Naive thymus-derived CD4-positive, alpha-beta T cell (primary cell): ENCODE measurements at regions of chr7 and their contacts with region 1.

Region 1: DNA sequence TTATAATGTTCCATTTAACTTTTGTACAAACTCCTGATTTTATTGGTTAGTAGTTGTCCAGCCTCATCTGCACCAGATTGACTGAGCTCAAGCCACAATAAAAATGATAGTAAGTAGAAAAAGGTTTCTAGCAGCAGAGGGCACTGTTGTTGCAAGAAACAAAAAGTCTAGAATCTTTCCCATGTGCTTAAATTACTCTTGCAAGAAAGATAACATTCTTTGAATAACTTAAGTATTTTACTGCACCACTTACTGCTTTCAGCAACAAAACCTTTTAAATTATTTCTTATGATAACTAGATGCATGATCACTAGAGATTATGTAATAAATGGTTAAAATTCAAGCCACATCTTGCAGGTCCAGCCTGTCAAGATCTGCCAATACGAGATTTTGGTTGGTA is 27.0 kb downstream of the LMOD2 start:
- DNase-seq: peak in 7 of 9 donors; percentile 4 to 53 (median 41)
- ATAC-seq: peak; percentile 45
- H3K4me3 ChIP-seq: no peak overlapping the region
- H3K4me3 Mint-ChIP-seq: no peak overlapping the region
- H3K27ac ChIP-seq: no peak overlapping the region
- H3K27ac Mint-ChIP-seq: no peak overlapping the region
- H3K4me1 ChIP-seq: no peaks in the 10 kb centered on the region
- H3K4me1 Mint-ChIP-seq: no peaks in the 10 kb centered on the region
- H3K27me3 ChIP-seq: no peaks in the 10 kb centered on the region
- H3K27me3 Mint-ChIP-seq: no peaks in the 10 kb centered on the region

Region 2: GRCh38 chr7:122457965-122458364 is 1224.7 kb before region 1 on chr7:
- CTCF ChIA-PET with region 1: no interaction called
- POLR2A ChIA-PET with region 1: no interaction called
- intact Hi-C with region 1: no loop called
- DNase-seq: no peak
- ATAC-seq: no peak
- H3K4me3 ChIP-seq: no peak overlapping the region
- H3K4me3 Mint-ChIP-seq: no peak overlapping the region
- H3K27ac ChIP-seq: no peak overlapping the region
- H3K27ac Mint-ChIP-seq: no peak overlapping the region
- H3K4me1 ChIP-seq: no peaks in the 10 kb centered on the region
- H3K4me1 Mint-ChIP-seq: no peaks in the 10 kb centered on the region
- H3K27me3 ChIP-seq: no peaks in the 10 kb centered on the region
- H3K27me3 Mint-ChIP-seq: no peaks in the 10 kb centered on the region

Region 3: GRCh38 chr7:123393623-123394022 is 289.1 kb before region 1 on chr7:
- CTCF ChIA-PET with region 1: no interaction called
- POLR2A ChIA-PET with region 1: no interaction called
- intact Hi-C with region 1: no loop called
- DNase-seq: no peak
- ATAC-seq: no peak
- H3K4me3 ChIP-seq: no peak overlapping the region
- H3K4me3 Mint-ChIP-seq: no peak overlapping the region
- H3K27ac ChIP-seq: no peak overlapping the region
- H3K27ac Mint-ChIP-seq: no peak overlapping the region
- H3K4me1 ChIP-seq: no peaks in the 10 kb centered on the region
- H3K4me1 Mint-ChIP-seq: no peaks in the 10 kb centered on the region
- H3K27me3 ChIP-seq: no peaks in the 10 kb centered on the region
- H3K27me3 Mint-ChIP-seq: peaks cover 0 to 6% (median 0%) of the 10 kb centered on the region in 5 donors

Region 4: GRCh38 chr7:123480107-123480506 is 202.6 kb before region 1 on chr7:
- CTCF ChIA-PET with region 1: no interaction called
- POLR2A ChIA-PET with region 1: no interaction called
- intact Hi-C with region 1: no loop called
- DNase-seq: no peak
- ATAC-seq: no peak
- H3K4me3 ChIP-seq: no peak overlapping the region
- H3K4me3 Mint-ChIP-seq: no peak overlapping the region
- H3K27ac ChIP-seq: no peak overlapping the region
- H3K27ac Mint-ChIP-seq: no peak overlapping the region
- H3K4me1 ChIP-seq: no peaks in the 10 kb centered on the region
- H3K4me1 Mint-ChIP-seq: no peaks in the 10 kb centered on the region
- H3K27me3 ChIP-seq: no peaks in the 10 kb centered on the region
- H3K27me3 Mint-ChIP-seq: peaks cover 0 to 44% (median 25%) of the 10 kb centered on the region in 5 donors

Region 5: DNA sequence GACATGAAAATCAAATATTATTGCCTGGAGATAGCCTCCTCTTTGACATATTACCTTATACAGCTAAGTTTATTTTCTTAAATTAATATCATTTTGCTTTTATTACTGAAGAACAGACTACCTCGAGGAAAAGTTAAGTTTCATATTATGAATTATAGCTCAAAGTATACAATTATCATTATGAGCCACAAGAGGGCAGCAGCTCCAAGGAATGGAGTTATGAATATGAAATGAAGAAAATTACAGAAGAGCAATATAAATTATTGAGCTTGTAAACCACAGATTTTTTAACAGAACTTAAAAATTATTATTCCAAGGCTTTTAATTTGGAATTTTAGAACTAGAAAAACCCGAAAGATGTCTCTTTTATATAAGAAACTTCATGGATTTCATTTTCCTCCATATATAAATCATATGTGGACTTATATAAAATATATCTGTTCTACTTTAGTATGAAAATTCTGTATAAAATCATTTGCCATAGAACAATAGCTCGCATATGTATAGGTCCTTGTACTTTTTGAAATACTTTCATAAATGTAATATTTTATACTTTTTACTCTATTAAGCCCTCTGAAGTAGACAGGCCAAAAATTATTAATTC is 188.4 kb before region 1 on chr7:
- CTCF ChIA-PET with region 1: no interaction called
- POLR2A ChIA-PET with region 1: no interaction called
- intact Hi-C with region 1: loop called in 1 of 2 experiments (anchors 5 kb)
- DNase-seq: peak in 6 of 9 donors; percentile 2 to 46 (median 36)
- ATAC-seq: peak; percentile 67
- H3K4me3 ChIP-seq: no peak overlapping the region
- H3K4me3 Mint-ChIP-seq: no peak overlapping the region
- H3K27ac ChIP-seq: no peak overlapping the region
- H3K27ac Mint-ChIP-seq: no peak overlapping the region
- H3K4me1 ChIP-seq: no peaks in the 10 kb centered on the region
- H3K4me1 Mint-ChIP-seq: no peaks in the 10 kb centered on the region
- H3K27me3 ChIP-seq: no peaks in the 10 kb centered on the region
- H3K27me3 Mint-ChIP-seq: peaks cover 10 to 41% (median 30%) of the 10 kb centered on the region in 5 donors

Region 6: DNA sequence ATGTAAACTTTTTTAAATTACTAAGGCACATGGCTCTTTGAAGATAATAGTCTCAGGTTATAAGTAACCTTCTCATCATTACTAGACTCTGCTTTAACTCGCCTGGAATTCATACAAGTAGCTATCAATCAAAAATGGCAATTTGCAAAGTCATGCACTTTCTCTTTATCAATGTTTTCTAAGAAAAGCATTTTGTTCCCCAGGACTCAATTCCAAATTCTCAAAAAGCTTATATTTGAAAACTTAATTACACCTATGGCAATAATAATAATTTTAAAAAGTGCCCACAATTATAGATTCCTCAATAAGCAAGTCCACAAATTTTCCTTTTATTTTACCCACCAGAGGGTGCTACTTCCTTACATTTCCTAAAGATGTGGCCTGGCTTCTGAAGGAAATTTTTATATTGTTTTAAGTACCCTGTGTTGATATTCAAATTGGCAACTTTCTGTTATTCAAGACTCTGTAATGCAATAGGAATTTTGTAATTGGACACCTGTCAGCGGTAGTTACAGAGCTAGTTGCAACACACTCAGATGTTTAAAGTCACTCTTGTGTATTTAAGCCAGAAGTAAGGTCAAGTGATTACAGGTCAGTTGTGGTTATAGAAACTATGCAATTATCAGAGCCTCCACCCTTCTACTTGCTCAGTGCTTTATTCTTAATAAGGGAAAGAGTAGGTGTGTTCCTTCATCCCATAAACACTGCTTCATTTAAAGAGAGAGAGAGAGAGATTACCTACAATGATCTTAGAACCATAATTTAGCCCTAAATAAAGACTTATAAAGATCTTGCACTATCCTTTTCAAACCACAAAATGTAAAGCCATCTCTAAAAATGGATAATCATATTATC is 115.2 kb after region 1 on chr7:
- CTCF ChIA-PET with region 1: no interaction called
- POLR2A ChIA-PET with region 1: no interaction called
- intact Hi-C with region 1: loop called in 1 of 2 experiments (anchors 5 kb)
- DNase-seq: peak in 5 of 9 donors; percentile 3 to 10 (median 9)
- ATAC-seq: no peak
- H3K4me3 ChIP-seq: no peak overlapping the region
- H3K4me3 Mint-ChIP-seq: no peak overlapping the region
- H3K27ac ChIP-seq: no peak overlapping the region
- H3K27ac Mint-ChIP-seq: no peak overlapping the region
- H3K4me1 ChIP-seq: no peaks in the 10 kb centered on the region
- H3K4me1 Mint-ChIP-seq: no peaks in the 10 kb centered on the region
- H3K27me3 ChIP-seq: no peaks in the 10 kb centered on the region
- H3K27me3 Mint-ChIP-seq: peaks cover 0 to 3% (median 0%) of the 10 kb centered on the region in 5 donors

Region 7: DNA sequence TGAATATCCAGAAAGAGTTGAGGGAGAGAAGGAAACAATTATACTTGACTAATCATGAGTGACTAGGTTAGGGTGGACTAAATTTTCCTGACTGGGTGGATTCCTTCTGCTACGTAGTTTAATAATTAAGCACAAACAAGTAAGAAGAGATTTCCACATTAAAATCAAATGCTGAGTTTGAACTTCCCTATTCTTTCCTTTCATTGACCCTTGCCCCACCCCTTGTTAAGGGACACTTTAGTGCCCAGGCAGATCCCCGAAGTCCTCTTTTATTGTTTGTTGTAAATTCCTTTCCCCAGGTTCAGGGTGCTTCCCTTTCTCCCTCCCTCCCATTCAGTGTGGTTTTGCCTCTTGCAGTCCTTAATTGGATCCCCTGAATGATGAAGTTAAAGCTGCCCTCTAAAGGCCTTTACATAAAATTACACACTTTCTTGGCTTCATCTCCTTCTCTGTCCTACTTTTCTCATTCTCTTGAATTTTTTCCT is 233.6 kb after region 1 on chr7:
- CTCF ChIA-PET with region 1: no interaction called
- POLR2A ChIA-PET with region 1: no interaction called
- intact Hi-C with region 1: loop called (anchors 2 to 5 kb)
- DNase-seq: no peak
- ATAC-seq: no peak
- H3K4me3 ChIP-seq: no peak overlapping the region
- H3K4me3 Mint-ChIP-seq: no peak overlapping the region
- H3K27ac ChIP-seq: no peak overlapping the region
- H3K27ac Mint-ChIP-seq: no peak overlapping the region
- H3K4me1 ChIP-seq: no peaks in the 10 kb centered on the region
- H3K4me1 Mint-ChIP-seq: no peaks in the 10 kb centered on the region
- H3K27me3 ChIP-seq: no peaks in the 10 kb centered on the region
- H3K27me3 Mint-ChIP-seq: peaks cover 0 to 9% (median 4%) of the 10 kb centered on the region in 5 donors

Region 8: DNA sequence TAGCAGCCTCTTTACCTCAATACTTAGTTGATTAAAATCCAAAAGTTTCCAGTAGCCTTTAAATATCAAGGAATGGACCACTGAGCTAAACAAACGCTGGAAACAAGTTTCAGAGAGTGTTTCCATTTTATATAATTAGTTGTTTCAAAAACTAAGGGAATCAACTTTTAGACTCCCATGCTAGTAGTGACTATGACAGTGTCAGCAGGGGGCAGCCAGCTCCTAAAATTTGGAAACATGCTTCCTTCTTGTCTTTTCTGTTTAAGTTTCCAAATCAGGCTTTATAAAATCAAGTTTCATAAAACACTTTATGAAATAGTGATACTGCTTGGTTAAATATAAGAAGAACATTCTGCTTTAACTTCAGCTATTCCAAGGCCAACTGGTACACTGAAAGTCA is 488.4 kb after region 1 on chr7:
- CTCF ChIA-PET with region 1: no interaction called
- POLR2A ChIA-PET with region 1: no interaction called
- intact Hi-C with region 1: no loop called
- DNase-seq: no peak
- ATAC-seq: no peak
- H3K4me3 ChIP-seq: no peak overlapping the region
- H3K4me3 Mint-ChIP-seq: no peak overlapping the region
- H3K27ac ChIP-seq: no peak overlapping the region
- H3K27ac Mint-ChIP-seq: no peak overlapping the region
- H3K4me1 ChIP-seq: no peaks in the 10 kb centered on the region
- H3K4me1 Mint-ChIP-seq: no peaks in the 10 kb centered on the region
- H3K27me3 ChIP-seq: no peaks in the 10 kb centered on the region
- H3K27me3 Mint-ChIP-seq: no peaks in the 10 kb centered on the region

Region 9: DNA sequence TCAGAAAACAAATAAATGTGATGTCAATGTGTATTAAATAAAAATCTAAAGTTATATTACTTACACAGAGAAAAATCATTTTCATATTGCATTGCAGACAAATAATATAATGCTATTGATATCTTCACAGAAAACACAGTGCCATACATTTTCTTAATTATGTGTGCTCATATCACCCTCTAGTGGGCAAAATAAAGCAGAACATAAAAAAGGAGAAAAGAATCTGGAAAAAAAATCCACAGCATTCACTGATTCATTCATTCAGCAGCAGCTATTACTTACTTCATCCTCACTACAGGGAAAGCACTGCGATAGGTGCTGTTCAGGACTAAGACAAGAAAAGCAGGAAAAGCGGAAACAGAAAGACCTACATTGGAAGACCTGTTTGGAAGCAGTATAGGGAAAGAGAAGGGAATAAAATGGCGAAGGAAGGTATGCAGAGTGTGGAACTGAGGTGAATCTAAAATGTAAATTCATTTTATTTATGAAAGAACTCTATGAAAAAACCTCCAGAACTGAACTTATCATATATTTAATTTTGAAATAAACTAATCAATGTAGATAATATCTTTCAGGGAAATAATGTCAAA is 1173.7 kb after region 1 on chr7:
- CTCF ChIA-PET with region 1: no interaction called
- POLR2A ChIA-PET with region 1: no interaction called
- intact Hi-C with region 1: loop called in 1 of 2 experiments (anchors 1 kb)
- DNase-seq: peak in 4 of 9 donors; percentile 3 to 23 (median 8)
- ATAC-seq: peak; percentile 52
- H3K4me3 ChIP-seq: no peak overlapping the region
- H3K4me3 Mint-ChIP-seq: no peak overlapping the region
- H3K27ac ChIP-seq: no peak overlapping the region
- H3K27ac Mint-ChIP-seq: no peak overlapping the region
- H3K4me1 ChIP-seq: no peaks in the 10 kb centered on the region
- H3K4me1 Mint-ChIP-seq: peaks cover 0 to 3% (median 0%) of the 10 kb centered on the region in 7 donors
- H3K27me3 ChIP-seq: no peaks in the 10 kb centered on the region
- H3K27me3 Mint-ChIP-seq: no peaks in the 10 kb centered on the region